RWPE1 (cell line): ENCODE measurements at regions of chr5 and their contacts with region 1.

Region 1: GRCh38 chr5:126676195-126676624 is 75.5 kb downstream of the PHAX start:
- DNase-seq: peak; percentile 96
- H3K27ac ChIP-seq: no peak overlapping the region
- CTCF ChIP-seq: peak; percentile 91

Region 2: DNA sequence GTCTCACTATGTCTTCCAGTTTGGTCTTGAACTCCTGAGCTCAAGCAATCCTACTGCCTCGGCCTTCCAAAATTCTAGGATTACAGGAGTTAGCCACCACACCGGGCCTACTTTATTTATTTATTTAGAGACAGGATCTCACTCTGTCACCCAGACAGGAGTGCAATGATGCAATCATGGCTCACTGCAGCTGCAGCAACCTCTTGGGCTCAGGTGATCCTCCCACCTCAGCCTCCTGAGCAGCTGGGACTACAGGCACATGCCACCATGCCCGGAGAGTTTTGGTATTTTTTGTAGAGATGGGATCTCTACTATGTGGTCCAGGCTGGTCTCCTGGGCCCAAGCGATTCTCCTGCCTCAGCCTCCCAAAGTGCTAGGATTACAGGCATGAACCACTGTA is 42.7 kb before region 1 on chr5:
- CTCF ChIA-PET with region 1: no interaction called
- POLR2A ChIA-PET with region 1: no interaction called
- DNase-seq: no peak
- H3K27ac ChIP-seq: no peak overlapping the region
- CTCF ChIP-seq: no peak

Region 3: DNA sequence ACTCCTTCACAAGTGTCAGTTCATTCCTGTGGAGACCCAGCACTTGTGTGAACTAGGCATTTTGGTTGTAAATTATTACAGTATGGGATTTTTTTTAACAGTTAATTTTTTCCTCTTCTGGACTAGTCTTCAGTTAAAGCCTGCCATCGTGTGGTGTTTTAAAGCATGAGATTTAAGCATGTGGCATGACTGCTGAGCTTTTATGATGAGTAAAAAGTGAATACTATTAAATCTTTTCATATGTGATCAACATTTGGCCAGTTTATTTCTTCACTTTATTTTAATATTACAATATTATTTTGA is 125.7 kb after region 1 on chr5:
- CTCF ChIA-PET with region 1: interaction called, 13 read pairs
- POLR2A ChIA-PET with region 1: no interaction called
- DNase-seq: no peak
- H3K27ac ChIP-seq: no peak overlapping the region
- CTCF ChIP-seq: peak; percentile 55; the same call in 1 of the 2 replicates